B cell (primary cell): ENCODE measurements at regions of chr19 and their contacts with region 1.

Region 1: DNA sequence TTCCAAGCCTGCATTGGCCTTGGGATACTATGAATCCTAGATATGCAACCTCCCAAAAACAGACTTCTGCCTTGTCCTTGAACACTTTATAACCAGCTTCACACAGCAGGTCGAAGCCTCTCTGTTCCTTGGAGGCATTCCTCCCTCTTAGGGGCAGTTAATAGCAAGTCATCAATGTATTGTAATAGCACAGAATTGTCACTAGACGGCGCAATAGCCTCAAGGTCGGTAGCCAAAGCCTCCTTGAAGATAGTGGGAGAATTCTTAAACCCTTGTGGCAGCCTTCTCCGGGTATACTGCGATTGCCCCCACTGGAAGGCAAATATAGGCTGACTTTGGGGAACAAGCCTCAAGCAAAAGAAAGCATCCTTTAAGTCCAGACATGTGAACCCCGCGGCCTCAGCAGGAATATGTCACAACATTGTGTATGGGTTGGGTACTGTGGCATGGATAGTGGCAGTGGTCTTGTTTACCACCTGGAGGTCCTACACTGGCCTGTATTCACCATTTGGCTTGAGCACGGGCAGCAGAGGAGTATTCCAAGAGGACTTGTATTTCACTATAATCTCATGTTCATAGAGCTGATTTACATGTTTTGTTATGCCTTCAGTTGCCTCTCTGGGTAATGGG is 61.1 kb downstream of the ZNF431 start:
- DNase-seq: peak; percentile 62
- ATAC-seq: no peak
- H3K4me3 ChIP-seq: no peak overlapping the region
- H3K4me3 Mint-ChIP-seq: no peak overlapping the region
- H3K27ac ChIP-seq: no peak overlapping the region
- H3K27ac Mint-ChIP-seq: no peak overlapping the region
- H3K4me1 ChIP-seq: no peaks in the 10 kb centered on the region
- H3K4me1 Mint-ChIP-seq: no peaks in the 10 kb centered on the region
- H3K27me3 ChIP-seq: no peaks in the 10 kb centered on the region
- H3K27me3 Mint-ChIP-seq: peaks cover 3% of the 10 kb centered on the region
- CTCF ChIP-seq: peak; percentile 78

Region 2: GRCh38 chr19:21158523-21159135 is 44.4 kb before region 1 on chr19:
- CTCF ChIA-PET with region 1: no interaction called
- POLR2A ChIA-PET with region 1: no interaction called
- intact Hi-C with region 1: no loop called
- DNase-seq: no peak
- ATAC-seq: no peak
- H3K4me3 ChIP-seq: no peak overlapping the region
- H3K4me3 Mint-ChIP-seq: no peak overlapping the region
- H3K27ac ChIP-seq: no peak overlapping the region
- H3K27ac Mint-ChIP-seq: no peak overlapping the region
- H3K4me1 ChIP-seq: no peaks in the 10 kb centered on the region
- H3K4me1 Mint-ChIP-seq: peaks cover 24% of the 10 kb centered on the region
- H3K27me3 ChIP-seq: no peaks in the 10 kb centered on the region
- H3K27me3 Mint-ChIP-seq: no peaks in the 10 kb centered on the region
- CTCF ChIP-seq: no peak

Region 3: GRCh38 chr19:21698215-21698614 is 495.2 kb after region 1 on chr19:
- CTCF ChIA-PET with region 1: interaction called, 15 read pairs
- POLR2A ChIA-PET with region 1: no interaction called
- intact Hi-C with region 1: no loop called
- DNase-seq: peak; percentile 44
- ATAC-seq: no peak
- H3K4me3 ChIP-seq: no peak overlapping the region
- H3K4me3 Mint-ChIP-seq: no peak overlapping the region
- H3K27ac ChIP-seq: no peak overlapping the region
- H3K27ac Mint-ChIP-seq: no peak overlapping the region
- H3K4me1 ChIP-seq: no peaks in the 10 kb centered on the region
- H3K4me1 Mint-ChIP-seq: no peaks in the 10 kb centered on the region
- H3K27me3 ChIP-seq: no peaks in the 10 kb centered on the region
- H3K27me3 Mint-ChIP-seq: peaks cover 5% of the 10 kb centered on the region
- CTCF ChIP-seq: peak; percentile 68

Region 4: GRCh38 chr19:21891081-21891480 is 688.1 kb after region 1 on chr19:
- CTCF ChIA-PET with region 1: interaction called, 3 read pairs
- POLR2A ChIA-PET with region 1: no interaction called
- intact Hi-C with region 1: loop called (anchors 5 kb)
- DNase-seq: no peak
- ATAC-seq: no peak
- H3K4me3 ChIP-seq: no peak overlapping the region
- H3K4me3 Mint-ChIP-seq: no peak overlapping the region
- H3K27ac ChIP-seq: no peak overlapping the region
- H3K27ac Mint-ChIP-seq: no peak overlapping the region
- H3K4me1 ChIP-seq: no peaks in the 10 kb centered on the region
- H3K4me1 Mint-ChIP-seq: no peaks in the 10 kb centered on the region
- H3K27me3 ChIP-seq: no peaks in the 10 kb centered on the region
- H3K27me3 Mint-ChIP-seq: no peaks in the 10 kb centered on the region
- CTCF ChIP-seq: no peak